ENCODE measurements at regions of chr2 and their contacts with region 1.

Region 1: GRCh38 chr2:210195101-210195852 is 24.1 kb upstream of the KANSL1L start:
- DNase-seq: no peak
- ATAC-seq: no peak

Region 2: GRCh38 chr2:209977386-209978239 is 217.7 kb before region 1 on chr2:
- intact Hi-C with region 1: loop called (anchors 1 kb)
- DNase-seq: no peak
- ATAC-seq: no peak

Region 3: GRCh38 chr2:210072922-210073509 is 122.3 kb before region 1 on chr2:
- intact Hi-C with region 1: loop called (anchors 5 kb)
- DNase-seq: no peak
- ATAC-seq: no peak

Measured in Right ventricle myocardium inferior (tissue), 1 donor.